IMR-90 (cell line): ENCODE measurements at regions of chr7 and their contacts with region 1.

Region 1: GRCh38 chr7:133846203-133846945 is 280.8 kb upstream of the LRGUK start:
- DNase-seq: no peak
- ATAC-seq: no peak; the same call in 1 of the 2 replicates
- H3K4me3 ChIP-seq: no peak overlapping the region
- H3K27ac ChIP-seq: no peak overlapping the region
- H3K4me1 ChIP-seq: 0 out of 2 replicates have a peak, but pooled peaks cover 2% of the 10 kb centered on the region
- H3K27me3 ChIP-seq: no peaks in the 10 kb centered on the region
- CTCF ChIP-seq: no peak
- POLR2A ChIP-seq: no peak
- RAD21 ChIP-seq: no peak

Region 2: GRCh38 chr7:133794479-133794878 is 51.9 kb before region 1 on chr7:
- CTCF ChIA-PET with region 1: no interaction called
- POLR2A ChIA-PET with region 1: no interaction called
- dilution Hi-C with region 1: no loop called
- in situ Hi-C with region 1: no loop called
- intact Hi-C with region 1: loop called (anchors 2 kb)
- DNase-seq: peak; percentile 11
- ATAC-seq: no peak
- H3K4me3 ChIP-seq: no peak overlapping the region
- H3K27ac ChIP-seq: no peak overlapping the region
- H3K4me1 ChIP-seq: peaks cover 5% of the 10 kb centered on the region; the same call in 1 of the 2 replicates
- H3K27me3 ChIP-seq: no peaks in the 10 kb centered on the region
- CTCF ChIP-seq: no peak
- POLR2A ChIP-seq: no peak
- RAD21 ChIP-seq: no peak